HepG2 (cell line): ENCODE measurements at regions of chr2 and their contacts with region 1.

Region 1: GRCh38 chr2:42944779-42945415 is 152.5 kb upstream of the HAAO start:
- DNase-seq: peak; percentile 59
- ATAC-seq: 0 out of 3 replicates have a peak, but pooled peaks have one; percentile 4
- H3K4me3 ChIP-seq: no peak overlapping the region
- H3K27ac ChIP-seq: no peak overlapping the region
- H3K4me1 ChIP-seq: peaks cover 95% of the 10 kb centered on the region
- H3K27me3 ChIP-seq: no peaks in the 10 kb centered on the region
- CTCF ChIP-seq: no peak
- EP300 ChIP-seq: no peak
- POLR2A ChIP-seq: no peak
- RAD21 ChIP-seq: no peak

Region 2: DNA sequence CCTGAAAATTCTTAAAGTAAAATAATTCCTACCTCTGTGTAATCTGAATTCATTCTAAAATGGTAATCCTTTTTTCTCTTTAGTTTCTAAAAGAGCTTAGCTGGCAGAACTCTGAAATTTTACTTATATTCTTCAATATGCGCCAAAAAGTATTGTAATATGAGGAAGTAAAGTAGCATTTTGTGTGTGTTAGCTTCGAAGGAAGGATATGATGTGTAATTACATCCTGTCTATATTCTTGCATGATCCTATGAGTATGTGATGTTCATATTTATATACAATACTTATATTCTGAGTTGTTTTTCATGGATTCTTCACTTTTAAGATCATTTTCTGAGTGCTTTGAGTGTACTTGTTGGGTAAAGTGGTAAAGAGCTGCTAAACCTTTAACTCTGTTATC is 1300.0 kb before region 1 on chr2:
- CTCF ChIA-PET with region 1: no interaction called
- POLR2A ChIA-PET with region 1: no interaction called
- in situ Hi-C with region 1: no loop called
- intact Hi-C with region 1: no loop called
- DNase-seq: no peak
- ATAC-seq: no peak
- H3K4me3 ChIP-seq: no peak overlapping the region
- H3K27ac ChIP-seq: no peak overlapping the region
- H3K4me1 ChIP-seq: no peaks in the 10 kb centered on the region
- H3K27me3 ChIP-seq: no peaks in the 10 kb centered on the region
- CTCF ChIP-seq: no peak
- EP300 ChIP-seq: no peak
- POLR2A ChIP-seq: no peak
- RAD21 ChIP-seq: no peak

Region 3: DNA sequence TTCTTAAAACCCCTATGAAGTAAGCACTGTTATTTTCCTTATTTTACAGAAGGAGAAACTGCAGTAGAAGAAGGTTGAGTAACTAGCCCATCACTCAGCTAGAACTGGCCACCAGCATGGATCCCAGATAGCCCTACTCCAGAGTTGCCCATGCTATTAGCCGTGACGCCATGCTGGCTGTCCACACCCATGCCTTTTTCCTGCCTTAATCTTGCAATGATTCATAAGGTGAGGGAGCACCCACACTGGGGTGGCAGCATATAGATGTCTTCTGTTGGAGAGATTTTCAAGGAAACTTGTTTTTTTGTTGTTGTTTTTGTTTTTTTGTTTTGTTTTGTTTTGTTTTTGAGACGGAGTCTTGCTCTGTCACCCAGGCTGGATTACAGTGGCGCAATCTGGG is 51.6 kb after region 1 on chr2:
- CTCF ChIA-PET with region 1: no interaction called
- POLR2A ChIA-PET with region 1: no interaction called
- in situ Hi-C with region 1: no loop called
- intact Hi-C with region 1: no loop called
- DNase-seq: no peak
- ATAC-seq: no peak
- H3K4me3 ChIP-seq: no peak overlapping the region
- H3K27ac ChIP-seq: no peak overlapping the region
- H3K4me1 ChIP-seq: peaks cover 30% of the 10 kb centered on the region
- H3K27me3 ChIP-seq: no peaks in the 10 kb centered on the region
- CTCF ChIP-seq: no peak
- EP300 ChIP-seq: no peak
- POLR2A ChIP-seq: no peak
- RAD21 ChIP-seq: no peak

Region 4: GRCh38 chr2:43024515-43025011 is 79.7 kb after region 1 on chr2:
- CTCF ChIA-PET with region 1: interaction called, 22 read pairs
- POLR2A ChIA-PET with region 1: interaction called, 4 read pairs
- in situ Hi-C with region 1: no loop called
- intact Hi-C with region 1: no loop called
- DNase-seq: no peak
- ATAC-seq: peak; percentile 83
- H3K4me3 ChIP-seq: no peak overlapping the region
- H3K27ac ChIP-seq: no peak overlapping the region
- H3K4me1 ChIP-seq: peaks cover 60% of the 10 kb centered on the region
- H3K27me3 ChIP-seq: no peaks in the 10 kb centered on the region
- CTCF ChIP-seq: peak; percentile 98
- EP300 ChIP-seq: peak in 1 of 2 experiments; percentile 19; a peak in 1 of 4 replicates
- POLR2A ChIP-seq: no peak
- RAD21 ChIP-seq: peak; percentile 94

Region 5: GRCh38 chr2:43110442-43110871 is 165.6 kb after region 1 on chr2:
- CTCF ChIA-PET with region 1: no interaction called
- POLR2A ChIA-PET with region 1: no interaction called
- in situ Hi-C with region 1: no loop called
- intact Hi-C with region 1: no loop called
- DNase-seq: peak; percentile 50
- ATAC-seq: no peak
- H3K4me3 ChIP-seq: no peak overlapping the region
- H3K27ac ChIP-seq: no peak overlapping the region
- H3K4me1 ChIP-seq: peaks cover 74% of the 10 kb centered on the region
- H3K27me3 ChIP-seq: no peaks in the 10 kb centered on the region
- CTCF ChIP-seq: no peak
- EP300 ChIP-seq: no peak
- POLR2A ChIP-seq: no peak
- RAD21 ChIP-seq: no peak

Region 6: GRCh38 chr2:43131024-43131889 is 186.4 kb after region 1 on chr2:
- CTCF ChIA-PET with region 1: interaction called, 9 read pairs
- POLR2A ChIA-PET with region 1: no interaction called
- in situ Hi-C with region 1: no loop called
- intact Hi-C with region 1: loop called (anchors 5 kb)
- DNase-seq: peak; percentile 80
- ATAC-seq: peak; percentile 68
- H3K4me3 ChIP-seq: peak overlapping the region in 1 of 3 experiments; percentile 34; a peak in 2 of 6 replicates
- H3K27ac ChIP-seq: peak overlapping the region; percentile 11
- H3K4me1 ChIP-seq: peaks cover 86% of the 10 kb centered on the region
- H3K27me3 ChIP-seq: no peaks in the 10 kb centered on the region
- CTCF ChIP-seq: peak; percentile 96
- EP300 ChIP-seq: peak in 1 of 2 experiments; percentile 15; a peak in 1 of 4 replicates
- POLR2A ChIP-seq: no peak
- RAD21 ChIP-seq: peak; percentile 97

Region 7: GRCh38 chr2:43542285-43542937 is 597.5 kb after region 1 on chr2:
- CTCF ChIA-PET with region 1: interaction called, 3 read pairs
- POLR2A ChIA-PET with region 1: interaction called, 3 read pairs
- in situ Hi-C with region 1: no loop called
- intact Hi-C with region 1: loop called (anchors 1 kb)
- DNase-seq: peak; percentile 54
- ATAC-seq: no peak
- H3K4me3 ChIP-seq: no peak overlapping the region
- H3K27ac ChIP-seq: no peak overlapping the region
- H3K4me1 ChIP-seq: peaks cover 11% of the 10 kb centered on the region
- H3K27me3 ChIP-seq: no peaks in the 10 kb centered on the region
- CTCF ChIP-seq: peak; percentile 67
- EP300 ChIP-seq: no peak
- POLR2A ChIP-seq: no peak
- RAD21 ChIP-seq: 0 out of 2 replicates have a peak, but pooled peaks have one; percentile 23